Panc1 (cell line): ENCODE measurements at regions of chr2 and their contacts with region 1.

Region 1: GRCh38 chr2:102615622-102616436 is 3.5 kb upstream of the SLC9A2 start:
- DNase-seq: peak; percentile 50
- ATAC-seq: peak; percentile 72
- H3K4me3 ChIP-seq: no peak overlapping the region
- H3K27ac ChIP-seq: no peak overlapping the region
- H3K4me1 ChIP-seq: peaks cover 10% of the 10 kb centered on the region
- H3K27me3 ChIP-seq: peaks cover 20% of the 10 kb centered on the region
- CTCF ChIP-seq: peak; percentile 97

Region 2: GRCh38 chr2:102442967-102443828 is 172.6 kb before region 1 on chr2:
- CTCF ChIA-PET with region 1: interaction called, 15 read pairs
- POLR2A ChIA-PET with region 1: no interaction called
- in situ Hi-C with region 1: no loop called
- intact Hi-C with region 1: no loop called
- DNase-seq: peak; percentile 17
- ATAC-seq: no peak
- H3K4me3 ChIP-seq: no peak overlapping the region
- H3K27ac ChIP-seq: no peak overlapping the region
- H3K4me1 ChIP-seq: no peaks in the 10 kb centered on the region
- H3K27me3 ChIP-seq: peaks cover 3% of the 10 kb centered on the region; the same call in 1 of the 2 replicates
- CTCF ChIP-seq: peak; percentile 82

Region 3: DNA sequence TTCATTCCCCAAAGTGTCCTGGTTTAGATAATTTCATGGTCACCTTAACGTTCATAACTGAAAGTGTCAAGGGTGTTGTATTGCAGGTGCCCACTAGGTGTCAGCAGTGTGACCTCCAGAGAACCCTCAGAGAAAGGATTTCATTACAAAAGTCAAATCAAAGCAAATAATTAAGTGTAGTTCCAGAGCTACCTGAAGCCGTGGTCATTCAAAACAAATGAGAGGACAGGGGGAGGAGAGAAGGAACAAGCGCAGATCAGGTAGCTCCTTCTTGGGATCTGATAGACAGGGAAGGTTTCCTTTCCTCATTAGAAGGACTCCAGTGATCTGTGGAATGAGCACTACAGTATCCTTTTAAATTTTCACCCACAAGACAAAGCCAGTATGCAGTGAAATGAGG is 142.8 kb before region 1 on chr2 and contains the start of gene SLC9A4:
- CTCF ChIA-PET with region 1: interaction called, 15 read pairs
- POLR2A ChIA-PET with region 1: no interaction called
- in situ Hi-C with region 1: no loop called
- intact Hi-C with region 1: loop called (anchors 1 kb)
- DNase-seq: peak; percentile 41
- ATAC-seq: peak; percentile 70; the same call in 1 of the 2 replicates
- H3K4me3 ChIP-seq: no peak within 1 kb of the TSS
- H3K27ac ChIP-seq: no peak within 1 kb of the TSS
- H3K4me1 ChIP-seq: no peaks in the 10 kb centered on the region
- H3K27me3 ChIP-seq: peaks cover 4% of the 10 kb centered on the region
- CTCF ChIP-seq: peak; percentile 86
- total RNA-seq, gene SLC9A4: not detected

Region 4: GRCh38 chr2:102520028-102520427 is 95.8 kb before region 1 on chr2:
- CTCF ChIA-PET with region 1: no interaction called
- POLR2A ChIA-PET with region 1: no interaction called
- in situ Hi-C with region 1: no loop called
- intact Hi-C with region 1: loop called (anchors 5 kb)
- DNase-seq: no peak
- ATAC-seq: peak; percentile 70
- H3K4me3 ChIP-seq: no peak overlapping the region
- H3K27ac ChIP-seq: no peak overlapping the region
- H3K4me1 ChIP-seq: no peaks in the 10 kb centered on the region
- H3K27me3 ChIP-seq: no peaks in the 10 kb centered on the region
- CTCF ChIP-seq: peak; percentile 82

Region 5: GRCh38 chr2:102686479-102687439 is 70.9 kb after region 1 on chr2:
- CTCF ChIA-PET with region 1: no interaction called
- POLR2A ChIA-PET with region 1: no interaction called
- in situ Hi-C with region 1: no loop called
- intact Hi-C with region 1: no loop called
- DNase-seq: no peak
- ATAC-seq: no peak
- H3K4me3 ChIP-seq: no peak overlapping the region
- H3K27ac ChIP-seq: no peak overlapping the region
- H3K4me1 ChIP-seq: no peaks in the 10 kb centered on the region
- H3K27me3 ChIP-seq: no peaks in the 10 kb centered on the region
- CTCF ChIP-seq: no peak

Region 6: DNA sequence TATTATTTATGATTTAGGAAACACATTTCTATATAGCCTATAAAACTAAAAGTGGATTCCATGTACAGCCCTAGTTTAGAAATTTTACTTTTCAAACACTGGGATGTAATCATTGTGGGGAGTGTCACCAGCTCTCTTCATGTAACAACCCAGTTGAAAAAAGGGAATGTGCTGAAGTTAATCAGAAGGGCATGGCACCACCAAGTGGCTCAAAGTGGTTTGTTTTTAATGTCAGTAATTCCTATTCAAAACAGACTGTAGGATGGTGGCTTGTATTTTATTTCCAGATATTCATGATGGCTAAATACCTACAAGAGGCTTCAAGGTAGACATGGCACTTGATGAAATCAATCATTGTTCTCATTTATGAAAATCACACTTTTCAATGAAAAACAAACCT is 87.9 kb after region 1 on chr2:
- CTCF ChIA-PET with region 1: interaction called, 6 read pairs
- POLR2A ChIA-PET with region 1: no interaction called
- in situ Hi-C with region 1: no loop called
- intact Hi-C with region 1: loop called (anchors 5 kb)
- DNase-seq: peak; percentile 39
- ATAC-seq: peak; percentile 94
- H3K4me3 ChIP-seq: no peak overlapping the region
- H3K27ac ChIP-seq: no peak overlapping the region
- H3K4me1 ChIP-seq: peaks cover 3% of the 10 kb centered on the region
- H3K27me3 ChIP-seq: no peaks in the 10 kb centered on the region
- CTCF ChIP-seq: peak; percentile 65; the same call in 1 of the 2 replicates

Region 7: DNA sequence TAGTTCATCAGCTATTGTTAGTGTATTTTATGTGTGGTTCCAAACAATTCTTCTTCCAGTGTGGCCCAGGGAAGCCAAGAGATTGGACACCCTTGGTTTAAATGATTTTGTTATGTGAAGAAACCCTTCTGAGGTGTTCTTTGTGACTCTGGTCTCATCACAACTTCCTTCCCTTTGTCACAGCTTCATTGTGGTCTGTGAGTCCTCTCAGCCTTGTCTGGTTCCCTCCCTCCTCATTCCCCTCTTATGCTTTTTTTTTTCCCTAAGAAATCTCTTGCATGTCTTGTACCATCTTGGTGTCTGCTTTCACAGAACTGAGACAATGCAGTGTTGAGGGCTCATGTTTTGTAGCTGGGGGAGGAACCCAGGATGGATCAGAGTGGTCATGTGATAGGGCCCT is 264.9 kb after region 1 on chr2:
- CTCF ChIA-PET with region 1: no interaction called
- POLR2A ChIA-PET with region 1: no interaction called
- in situ Hi-C with region 1: no loop called
- intact Hi-C with region 1: no loop called
- DNase-seq: no peak
- ATAC-seq: no peak
- H3K4me3 ChIP-seq: no peak overlapping the region
- H3K27ac ChIP-seq: no peak overlapping the region
- H3K4me1 ChIP-seq: no peaks in the 10 kb centered on the region
- H3K27me3 ChIP-seq: no peaks in the 10 kb centered on the region
- CTCF ChIP-seq: no peak